CD4-positive, alpha-beta memory T cell (primary cell): ENCODE measurements at regions of chr4 and their contacts with region 1.

Region 1: DNA sequence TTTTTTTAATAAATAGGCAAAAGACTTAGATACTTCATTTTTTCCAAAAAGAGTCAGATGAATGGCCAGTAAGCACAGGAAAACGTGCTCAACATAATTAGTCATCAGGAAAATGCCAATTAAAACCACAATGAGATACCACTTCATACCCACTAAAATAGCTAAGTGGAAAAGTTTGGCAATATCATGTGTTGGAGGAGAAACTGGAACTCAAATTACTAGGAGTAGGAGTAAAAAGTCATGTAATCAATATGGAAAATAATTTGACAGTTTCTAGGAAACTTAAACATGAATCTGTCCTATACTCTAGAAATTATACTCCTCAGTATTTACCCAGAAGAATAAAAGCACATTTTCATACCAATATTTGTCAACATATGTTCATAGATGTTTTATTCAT is 449.8 kb downstream of the INPP4B start:
- DNase-seq: no peak
- H3K4me3 ChIP-seq: peak overlapping the region in 1 of 2 donors; percentile 12
- H3K4me3 Mint-ChIP-seq: peak overlapping the region; percentile 73 to 88 (median 83)
- H3K27ac ChIP-seq: peak overlapping the region; percentile 47
- H3K27ac Mint-ChIP-seq: peak overlapping the region; percentile 62 to 98 (median 86)
- H3K4me1 ChIP-seq: peaks cover 77% of the 10 kb centered on the region
- H3K4me1 Mint-ChIP-seq: peaks cover 59 to 88% (median 72%) of the 10 kb centered on the region in 4 donors
- H3K27me3 ChIP-seq: no peaks in the 10 kb centered on the region
- H3K27me3 Mint-ChIP-seq: no peaks in the 10 kb centered on the region

Region 2: GRCh38 chr4:142030010-142030409 is 366.3 kb before region 1 on chr4:
- CTCF ChIA-PET with region 1: no interaction called
- POLR2A ChIA-PET with region 1: no interaction called
- intact Hi-C with region 1: no loop called
- DNase-seq: no peak
- H3K4me3 ChIP-seq: no peak overlapping the region
- H3K4me3 Mint-ChIP-seq: no peak overlapping the region
- H3K27ac ChIP-seq: no peak overlapping the region
- H3K27ac Mint-ChIP-seq: peak overlapping the region in 4 of 7 donors; percentile 44 to 67 (median 60)
- H3K4me1 ChIP-seq: no peaks in the 10 kb centered on the region
- H3K4me1 Mint-ChIP-seq: peaks cover 5 to 12% (median 10%) of the 10 kb centered on the region in 4 donors
- H3K27me3 ChIP-seq: no peaks in the 10 kb centered on the region
- H3K27me3 Mint-ChIP-seq: no peaks in the 10 kb centered on the region

Region 3: DNA sequence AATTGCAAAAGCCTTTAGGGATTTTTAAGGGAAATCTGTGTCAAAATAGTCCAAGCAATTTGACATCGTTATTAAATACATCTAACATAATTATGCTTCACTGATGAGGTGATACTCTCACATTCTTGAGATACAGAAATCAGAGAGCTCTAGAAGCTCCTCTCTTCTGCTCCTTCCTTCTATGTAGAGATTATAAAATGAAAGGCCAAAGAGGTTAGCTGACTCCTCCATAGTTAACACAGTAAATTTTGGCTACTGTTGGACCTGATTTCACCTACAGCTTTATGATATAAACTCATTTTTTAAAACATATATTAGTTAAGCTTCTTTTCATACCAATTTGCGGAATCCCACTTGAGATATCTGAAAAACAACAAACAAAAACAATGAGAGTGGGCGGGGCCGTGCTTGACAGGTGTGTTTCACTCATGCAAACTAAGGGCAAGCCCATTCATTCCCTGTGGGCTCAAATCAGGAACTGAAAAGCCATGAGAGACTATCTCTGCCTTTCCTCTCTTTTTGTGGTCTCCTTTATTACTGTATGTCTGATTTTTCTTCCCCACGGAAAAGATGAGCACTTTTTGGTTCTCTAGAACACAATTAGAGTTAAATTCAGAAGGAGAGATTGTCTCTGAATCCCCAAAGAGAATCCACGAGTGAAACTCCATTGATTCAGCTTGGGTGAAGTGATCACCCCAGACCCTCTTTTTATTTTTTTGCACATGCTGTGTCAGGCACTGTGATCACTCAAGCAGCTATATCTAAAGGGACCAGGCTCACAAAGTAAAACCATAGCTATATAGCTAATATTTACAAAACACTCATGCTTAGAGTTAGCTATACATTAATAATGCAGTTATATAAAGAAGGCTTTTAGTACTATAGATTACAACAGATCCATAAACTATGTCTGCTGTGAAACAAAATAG is 193.6 kb before region 1 on chr4:
- CTCF ChIA-PET with region 1: no interaction called
- POLR2A ChIA-PET with region 1: no interaction called
- intact Hi-C with region 1: no loop called
- DNase-seq: no peak
- H3K4me3 ChIP-seq: no peak overlapping the region
- H3K4me3 Mint-ChIP-seq: no peak overlapping the region
- H3K27ac ChIP-seq: no peak overlapping the region
- H3K27ac Mint-ChIP-seq: peak overlapping the region in 2 of 7 donors; percentile 5 to 36
- H3K4me1 ChIP-seq: no peaks in the 10 kb centered on the region
- H3K4me1 Mint-ChIP-seq: peaks cover 13 to 19% (median 15%) of the 10 kb centered on the region in 4 donors
- H3K27me3 ChIP-seq: no peaks in the 10 kb centered on the region
- H3K27me3 Mint-ChIP-seq: no peaks in the 10 kb centered on the region

Region 4: DNA sequence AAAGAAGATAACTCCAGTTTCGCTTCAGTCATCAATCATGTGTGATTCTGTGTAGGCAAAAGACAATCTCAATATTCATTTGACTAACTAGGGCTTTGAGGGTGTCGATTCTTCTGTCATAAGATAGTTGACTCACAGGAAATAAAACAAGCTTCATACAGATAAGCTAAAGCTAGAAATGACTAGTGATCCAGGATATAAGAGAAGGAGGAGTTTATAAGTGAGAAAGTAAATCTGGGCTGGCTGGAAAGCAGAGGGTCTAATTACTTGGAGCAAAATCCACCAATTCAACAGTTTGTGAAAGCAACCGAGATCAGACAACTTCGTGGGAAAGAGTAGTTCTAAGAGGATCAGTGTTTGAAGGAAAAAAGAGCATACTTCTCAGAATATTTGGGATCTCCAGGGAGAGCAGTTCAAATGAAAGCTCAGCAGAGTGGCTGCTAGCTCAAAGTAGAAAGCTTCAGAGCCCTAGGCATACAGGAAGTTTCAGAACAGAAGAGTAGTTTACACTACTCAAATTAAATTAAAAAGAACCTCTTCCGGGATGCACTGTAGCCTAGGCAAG is 20.5 kb after region 1 on chr4:
- CTCF ChIA-PET with region 1: interaction called, 3 read pairs
- POLR2A ChIA-PET with region 1: interaction called, 105 read pairs
- intact Hi-C with region 1: loop called (anchors 2 kb)
- DNase-seq: peak; percentile 39 to 62 (median 48)
- H3K4me3 ChIP-seq: peak overlapping the region; percentile 11 to 33
- H3K4me3 Mint-ChIP-seq: peak overlapping the region; percentile 71 to 90 (median 84)
- H3K27ac ChIP-seq: peak overlapping the region; percentile 70
- H3K27ac Mint-ChIP-seq: peak overlapping the region; percentile 77 to 95 (median 92)
- H3K4me1 ChIP-seq: peaks cover 42% of the 10 kb centered on the region
- H3K4me1 Mint-ChIP-seq: peaks cover 29 to 48% (median 33%) of the 10 kb centered on the region in 4 donors
- H3K27me3 ChIP-seq: no peaks in the 10 kb centered on the region
- H3K27me3 Mint-ChIP-seq: no peaks in the 10 kb centered on the region

Region 5: DNA sequence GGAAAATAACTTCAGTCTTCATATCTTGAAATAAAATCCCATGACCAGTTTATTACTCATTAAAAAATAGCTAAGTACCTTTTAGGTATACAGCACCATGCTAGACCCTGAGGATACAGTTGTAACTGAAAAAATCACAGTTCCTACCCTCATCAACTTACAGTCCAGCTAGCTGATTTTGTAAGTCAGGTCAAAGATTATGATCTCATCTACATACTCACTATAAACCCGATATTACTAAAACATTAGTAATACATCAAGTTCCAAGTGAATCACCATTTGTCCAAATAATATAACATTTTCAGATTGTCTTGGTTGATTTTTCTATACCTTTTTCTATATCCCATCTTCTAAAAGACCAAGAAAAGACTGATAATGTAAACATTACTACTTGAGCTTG is 115.9 kb after region 1 on chr4:
- CTCF ChIA-PET with region 1: no interaction called
- POLR2A ChIA-PET with region 1: no interaction called
- intact Hi-C with region 1: no loop called
- DNase-seq: no peak
- H3K4me3 ChIP-seq: no peak overlapping the region
- H3K4me3 Mint-ChIP-seq: no peak overlapping the region
- H3K27ac ChIP-seq: no peak overlapping the region
- H3K27ac Mint-ChIP-seq: no peak overlapping the region
- H3K4me1 ChIP-seq: no peaks in the 10 kb centered on the region
- H3K4me1 Mint-ChIP-seq: no peaks in the 10 kb centered on the region
- H3K27me3 ChIP-seq: no peaks in the 10 kb centered on the region
- H3K27me3 Mint-ChIP-seq: no peaks in the 10 kb centered on the region